Uterus (tissue), 4 donors: ENCODE measurements at regions of chr4 and their contacts with region 1.

Region 1: GRCh38 chr4:6986781-6987587 is 56.2 kb upstream of the TADA2B start:
- DNase-seq: peak; percentile 94 to 95
- H3K4me3 ChIP-seq: peak overlapping the region; percentile 60 to 82
- H3K27ac ChIP-seq: peak overlapping the region; percentile 88 to 93
- H3K4me1 ChIP-seq: peaks cover 9 to 10% of the 10 kb centered on the region in 2 donors
- H3K27me3 ChIP-seq: no peaks in the 10 kb centered on the region
- CTCF ChIP-seq: peak in 2 of 4 experiments; percentile 6 to 7
- POLR2A ChIP-seq: peak; percentile 66 to 78

Region 2: GRCh38 chr4:6658597-6659075 is 328.3 kb before region 1 on chr4:
- intact Hi-C with region 1: no loop called
- DNase-seq: peak in 1 of 2 donors; percentile 53
- H3K4me3 ChIP-seq: peak overlapping the region; percentile 29 to 35
- H3K27ac ChIP-seq: peak overlapping the region; percentile 84
- H3K4me1 ChIP-seq: peaks cover 0 to 6% of the 10 kb centered on the region in 2 donors
- H3K27me3 ChIP-seq: no peaks in the 10 kb centered on the region
- CTCF ChIP-seq: peak in 1 of 4 experiments; percentile 9
- POLR2A ChIP-seq: no peak

Region 3: GRCh38 chr4:6709230-6710114 is 277.5 kb before region 1 on chr4 and contains the start of gene MRFAP1L1:
- intact Hi-C with region 1: loop called (anchors 5 kb)
- DNase-seq: peak; percentile 97
- H3K4me3 ChIP-seq: peak within 1 kb of the TSS; percentile 69 to 75
- H3K27ac ChIP-seq: peak within 1 kb of the TSS; percentile 87 to 89
- H3K4me1 ChIP-seq: peaks cover 0 to 5% of the 10 kb centered on the region in 2 donors
- H3K27me3 ChIP-seq: no peaks in the 10 kb centered on the region
- CTCF ChIP-seq: peak in 2 of 4 experiments; percentile 12 to 26
- POLR2A ChIP-seq: peak in 1 of 2 donors; percentile 33
- total RNA-seq, gene MRFAP1L1: 56.9 to 99.9 (median 71.7) TPM

Region 4: GRCh38 chr4:7067452-7068278 is 80.7 kb after region 1 on chr4 and contains the start of gene GRPEL1:
- intact Hi-C with region 1: loop called (anchors 10 kb)
- DNase-seq: peak; percentile 100
- H3K4me3 ChIP-seq: peak within 1 kb of the TSS; percentile 66 to 73
- H3K27ac ChIP-seq: peak within 1 kb of the TSS; percentile 88 to 92
- H3K4me1 ChIP-seq: peaks cover 0 to 16% of the 10 kb centered on the region in 2 donors
- H3K27me3 ChIP-seq: no peaks in the 10 kb centered on the region
- CTCF ChIP-seq: peak in 1 of 4 experiments; percentile 24
- POLR2A ChIP-seq: peak; percentile 87 to 92
- total RNA-seq, gene GRPEL1: 7.4 to 55.0 (median 21.4) TPM

Region 5: GRCh38 chr4:7276515-7276914 is 289.5 kb after region 1 on chr4:
- intact Hi-C with region 1: no loop called
- DNase-seq: peak; percentile 32 to 43
- H3K4me3 ChIP-seq: no peak overlapping the region
- H3K27ac ChIP-seq: peak overlapping the region in 1 of 2 donors; percentile 45
- H3K4me1 ChIP-seq: no peaks in the 10 kb centered on the region
- H3K27me3 ChIP-seq: no peaks in the 10 kb centered on the region
- CTCF ChIP-seq: no peak
- POLR2A ChIP-seq: no peak

Region 6: GRCh38 chr4:7295911-7296660 is 309.1 kb after region 1 on chr4:
- intact Hi-C with region 1: no loop called
- DNase-seq: peak; percentile 42 to 66
- H3K4me3 ChIP-seq: no peak overlapping the region
- H3K27ac ChIP-seq: no peak overlapping the region
- H3K4me1 ChIP-seq: peaks cover 0 to 6% of the 10 kb centered on the region in 2 donors
- H3K27me3 ChIP-seq: no peaks in the 10 kb centered on the region
- CTCF ChIP-seq: peak; percentile 60 to 72 (median 71)
- POLR2A ChIP-seq: no peak